Colonic mucosa (tissue), 4 donors: ENCODE measurements at regions of chr12 and their contacts with region 1.

Region 1: DNA sequence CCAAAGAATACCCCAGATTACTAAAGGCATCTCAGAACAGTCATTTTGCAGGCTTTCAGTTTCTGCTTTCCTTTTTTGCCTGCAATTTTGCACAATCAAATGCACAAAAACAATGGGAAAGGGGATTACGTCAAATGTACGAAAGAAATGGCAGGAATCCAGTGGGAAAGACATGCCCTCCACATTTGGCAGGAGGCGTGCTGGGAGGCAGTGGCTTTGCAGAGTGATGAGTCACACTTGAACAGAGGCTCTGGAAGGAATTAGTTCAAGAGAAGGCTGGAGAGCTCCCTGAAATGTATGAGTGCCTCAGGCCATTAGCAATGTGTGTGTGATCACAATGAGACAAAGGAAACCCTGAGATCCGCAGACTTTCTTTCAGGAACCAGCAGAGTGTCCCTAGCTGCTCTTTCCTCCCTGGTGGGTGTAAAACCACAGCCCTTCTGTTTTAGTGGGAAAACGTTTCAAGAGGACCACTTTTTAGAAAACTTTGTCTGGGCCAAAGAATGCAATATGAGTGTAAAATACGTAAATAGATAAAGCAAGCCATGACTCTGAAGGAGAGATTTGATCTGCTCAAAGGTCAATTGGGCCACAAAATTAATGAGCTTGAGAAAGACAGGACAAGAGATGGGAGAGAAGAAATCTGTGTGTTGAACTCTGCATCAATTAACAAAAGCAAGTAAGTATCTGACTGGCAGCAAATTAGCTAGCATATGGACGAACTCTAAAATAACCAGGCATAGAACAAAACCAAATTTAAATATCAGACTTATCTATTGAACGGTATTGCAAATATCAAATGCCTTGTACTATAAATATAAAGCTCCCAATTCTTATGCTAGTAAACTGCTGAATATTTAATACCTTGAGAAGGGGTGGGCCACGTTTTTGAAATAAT is 155.4 kb upstream of the PDE3A start:
- DNase-seq: peak; percentile 66
- H3K4me3 ChIP-seq: no peak overlapping the region
- H3K27ac ChIP-seq: peak overlapping the region; percentile 42
- H3K4me1 ChIP-seq: peaks cover 4% of the 10 kb centered on the region
- H3K27me3 ChIP-seq: no peaks in the 10 kb centered on the region
- CTCF ChIP-seq: no peak

Region 2: DNA sequence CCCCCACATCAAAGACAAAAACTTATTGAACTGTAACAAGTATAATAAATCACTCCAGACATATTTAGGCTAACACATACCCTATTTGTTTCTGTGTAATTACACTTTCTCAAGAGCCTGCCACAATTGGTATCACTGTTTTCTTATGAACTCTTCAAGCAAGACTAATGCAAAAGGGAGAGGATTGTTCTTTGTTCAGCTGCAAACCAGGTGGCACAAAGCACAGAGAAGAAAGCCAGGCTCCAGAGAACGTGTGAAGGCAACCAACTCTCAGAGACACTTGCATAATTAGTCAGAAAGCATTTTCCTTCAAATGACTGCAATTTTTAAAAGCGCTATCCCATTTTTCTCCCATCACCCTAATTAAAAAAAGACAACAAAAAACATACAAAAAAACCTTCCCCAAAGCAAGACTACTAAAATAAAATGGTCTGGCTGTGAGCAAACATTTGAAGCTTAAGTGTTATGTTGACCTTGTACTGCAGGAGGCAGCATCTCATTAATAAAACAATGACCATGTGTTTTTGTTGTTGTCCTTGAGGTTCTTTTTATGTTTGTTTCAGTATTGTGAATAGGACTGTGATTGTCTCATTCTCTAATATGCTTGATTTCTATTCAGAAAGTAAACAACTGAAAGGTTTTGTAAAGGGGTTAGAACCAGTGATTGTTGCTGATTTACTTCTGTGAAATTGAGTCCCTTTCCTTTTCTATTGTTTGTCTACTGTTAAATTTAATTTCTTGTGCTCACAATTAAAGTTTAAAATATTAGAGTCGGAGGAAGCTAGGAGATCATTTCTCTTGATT is 297.3 kb before region 1 on chr12:
- intact Hi-C with region 1: loop called (anchors 10 kb)
- DNase-seq: no peak
- H3K4me3 ChIP-seq: no peak overlapping the region
- H3K27ac ChIP-seq: no peak overlapping the region
- H3K4me1 ChIP-seq: no peaks in the 10 kb centered on the region
- H3K27me3 ChIP-seq: no peaks in the 10 kb centered on the region
- CTCF ChIP-seq: peak; percentile 52

Region 3: DNA sequence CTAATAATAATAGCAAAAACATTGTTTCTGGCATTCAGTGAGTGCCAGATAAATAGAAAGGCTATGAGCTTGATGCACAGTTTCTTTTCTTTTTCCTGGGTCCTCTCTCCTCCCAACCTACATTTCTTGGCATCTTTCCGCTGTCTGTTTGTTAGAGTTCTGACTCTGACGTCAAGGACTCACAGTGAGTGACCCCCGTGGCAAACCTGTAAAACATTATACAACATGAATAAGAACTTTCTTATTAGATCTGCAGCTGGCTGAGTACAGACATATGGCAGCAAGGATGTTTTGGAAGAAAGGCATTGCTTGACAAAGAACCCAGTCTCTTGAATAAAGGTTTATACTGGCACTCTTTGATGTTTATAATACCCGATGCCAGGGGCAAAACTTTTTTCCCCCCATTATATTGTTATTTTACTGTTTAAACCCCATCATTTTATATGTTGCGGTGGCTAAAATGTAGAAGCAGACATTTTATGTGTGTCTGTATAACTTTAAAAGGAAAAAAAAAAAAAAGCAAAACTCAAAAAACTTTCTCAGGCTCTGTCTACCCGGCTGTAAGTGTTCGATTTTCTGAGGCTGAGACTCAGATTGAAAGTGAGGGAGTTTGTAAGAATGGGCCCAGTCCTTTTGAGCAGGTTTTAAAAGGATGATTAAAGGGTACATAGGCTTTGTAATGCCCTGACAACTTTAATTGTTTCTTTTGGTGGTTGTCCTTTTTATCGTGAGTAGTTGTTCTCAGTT is 314.7 kb after region 1 on chr12:
- intact Hi-C with region 1: no loop called
- DNase-seq: no peak
- H3K4me3 ChIP-seq: no peak overlapping the region
- H3K27ac ChIP-seq: no peak overlapping the region
- H3K4me1 ChIP-seq: no peaks in the 10 kb centered on the region
- H3K27me3 ChIP-seq: no peaks in the 10 kb centered on the region
- CTCF ChIP-seq: no peak